ENCODE measurements at regions of chr16 and their contacts with region 1.

Region 1: GRCh38 chr16:74606521-74607310 is at the start of gene GLG1:
- DNase-seq: peak; percentile 51
- ATAC-seq: peak; percentile 95
- H3K4me3 ChIP-seq: peak within 1 kb of the TSS; percentile 93
- H3K27ac ChIP-seq: peak within 1 kb of the TSS; percentile 83
- H3K4me1 ChIP-seq: peaks cover 2% of the 10 kb centered on the region; the same call in 1 of the 2 replicates
- H3K27me3 ChIP-seq: no peaks in the 10 kb centered on the region
- CTCF ChIP-seq: peak in 1 of 3 experiments; percentile 22; a peak in 1 of 6 replicates
- EP300 ChIP-seq: no peak
- POLR2A ChIP-seq: peak; percentile 99
- RAD21 ChIP-seq: no peak
- polyA plus RNA-seq, gene GLG1: 7.6 to 9.6 TPM

Region 2: DNA sequence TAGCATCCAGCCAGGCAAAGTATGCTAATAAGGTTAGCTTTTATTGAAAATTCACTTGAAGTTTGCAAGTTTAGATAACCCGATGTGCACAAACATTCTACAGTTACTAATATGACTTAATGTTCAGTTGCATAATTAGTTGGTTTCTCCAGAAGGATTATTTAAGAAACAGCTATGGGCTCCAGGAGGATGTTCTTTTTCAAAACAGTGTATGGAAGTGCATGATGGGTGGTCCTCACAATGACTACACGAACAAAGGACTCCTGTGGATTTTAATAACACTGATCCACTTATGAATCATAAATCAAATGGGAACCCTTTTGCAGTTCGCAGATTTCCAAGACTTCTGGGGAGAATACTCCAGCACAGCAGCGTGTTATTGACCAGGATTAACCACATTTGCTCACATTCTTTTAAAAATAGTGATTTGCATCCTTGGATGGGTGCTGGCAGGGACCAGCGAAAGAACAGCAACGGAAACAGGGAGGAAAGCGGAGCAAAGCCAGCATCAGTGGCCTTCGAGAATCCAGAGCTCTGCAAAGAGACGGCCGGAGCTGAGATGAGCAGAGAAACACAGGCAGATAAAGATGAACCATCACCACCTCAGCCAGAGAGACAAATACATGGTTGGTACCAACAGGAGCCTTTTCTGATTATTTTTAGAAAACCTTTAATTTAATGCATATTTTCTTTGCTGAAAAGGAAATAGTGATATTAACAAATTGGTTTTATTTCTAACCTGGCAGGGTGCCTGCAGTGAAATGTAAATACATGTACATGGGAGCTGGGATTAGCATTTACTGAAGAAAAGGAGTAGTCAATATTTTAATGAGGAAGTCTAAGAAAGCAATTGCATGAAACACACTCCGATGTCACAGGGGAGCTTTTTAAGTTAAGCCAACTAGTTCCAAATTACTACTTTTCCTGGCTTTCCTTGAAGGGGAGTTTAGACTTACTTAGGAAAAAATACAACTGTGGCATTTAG is 935.6 kb before region 1 on chr16:
- CTCF ChIA-PET with region 1: no interaction called
- POLR2A ChIA-PET with region 1: no interaction called
- RAD21 ChIA-PET with region 1: no interaction called
- SMC1A ChIA-PET with region 1: no interaction called
- in situ Hi-C with region 1: no loop called
- intact Hi-C with region 1: no loop called
- DNase-seq: no peak
- ATAC-seq: no peak
- H3K4me3 ChIP-seq: no peak overlapping the region
- H3K27ac ChIP-seq: no peak overlapping the region
- H3K4me1 ChIP-seq: no peaks in the 10 kb centered on the region
- H3K27me3 ChIP-seq: no peaks in the 10 kb centered on the region
- CTCF ChIP-seq: no peak
- EP300 ChIP-seq: no peak
- POLR2A ChIP-seq: no peak
- RAD21 ChIP-seq: no peak

Region 3: GRCh38 chr16:74577882-74578366 is 28.8 kb before region 1 on chr16:
- CTCF ChIA-PET with region 1: no interaction called
- POLR2A ChIA-PET with region 1: interaction called, 8 read pairs
- RAD21 ChIA-PET with region 1: no interaction called
- SMC1A ChIA-PET with region 1: interaction called, 21 read pairs
- in situ Hi-C with region 1: no loop called
- intact Hi-C with region 1: no loop called
- DNase-seq: peak; percentile 57
- ATAC-seq: peak; percentile 76
- H3K4me3 ChIP-seq: no peak overlapping the region; the same call in 1 of the 2 replicates
- H3K27ac ChIP-seq: peak overlapping the region; percentile 43; the same call in 1 of the 2 replicates
- H3K4me1 ChIP-seq: peaks cover 24% of the 10 kb centered on the region
- H3K27me3 ChIP-seq: no peaks in the 10 kb centered on the region
- CTCF ChIP-seq: no peak
- EP300 ChIP-seq: peak in 1 of 2 experiments; percentile 20; a peak in 1 of 4 replicates
- POLR2A ChIP-seq: no peak
- RAD21 ChIP-seq: no peak